ENCODE measurements at regions of chr20 and their contacts with region 1.

Region 1: GRCh38 chr20:40689943-40690835 is 1.2 kb upstream of the MAFB start:
- DNase-seq: peak; percentile 92 to 98 (median 96)
- ATAC-seq: peak; percentile 69 to 72
- H3K4me3 ChIP-seq: peak overlapping the region; percentile 61
- H3K27ac ChIP-seq: peak overlapping the region; percentile 91
- H3K4me1 ChIP-seq: no peaks in the 10 kb centered on the region
- H3K27me3 ChIP-seq: no peaks in the 10 kb centered on the region

Region 2: DNA sequence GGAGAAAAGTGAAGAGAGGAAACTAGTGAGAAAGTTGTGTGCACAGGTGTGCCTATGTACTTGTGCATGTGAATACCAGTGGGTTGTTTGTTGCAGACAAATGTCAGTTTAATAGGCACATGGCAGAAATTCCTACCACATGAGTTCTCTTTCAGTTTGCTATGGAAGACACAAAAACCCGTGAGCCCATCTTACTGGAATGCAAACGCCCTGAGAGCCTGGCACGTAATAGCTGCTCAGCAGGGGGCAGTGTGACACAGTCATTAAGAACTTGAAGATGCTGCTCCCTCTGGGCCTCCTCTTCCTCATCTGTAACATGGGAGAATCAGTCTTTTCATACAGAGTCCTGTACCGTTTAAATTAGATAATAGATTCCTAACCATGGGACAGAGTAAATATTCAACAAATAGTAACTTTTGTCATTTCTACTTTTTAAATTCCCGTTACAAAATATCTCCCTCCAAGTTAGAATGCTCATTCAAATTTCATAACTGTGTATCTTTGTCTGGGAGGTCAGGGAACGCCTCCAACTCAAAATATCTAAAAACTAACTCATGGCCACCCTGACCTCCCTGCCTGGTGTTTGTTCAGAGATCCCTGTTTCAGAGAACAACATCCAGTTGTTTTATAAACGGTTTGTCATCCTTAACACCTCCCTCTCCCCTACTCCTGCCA is 804.1 kb before region 1 on chr20:
- intact Hi-C with region 1: loop called in 2 of 4 experiments (anchors 10 kb)
- DNase-seq: peak; percentile 73 to 87 (median 78)
- ATAC-seq: peak; percentile 84
- H3K4me3 ChIP-seq: no peak overlapping the region
- H3K27ac ChIP-seq: no peak overlapping the region
- H3K4me1 ChIP-seq: no peaks in the 10 kb centered on the region
- H3K27me3 ChIP-seq: no peaks in the 10 kb centered on the region

Region 3: GRCh38 chr20:40101560-40101959 is 588.6 kb before region 1 on chr20:
- intact Hi-C with region 1: no loop called
- DNase-seq: no peak
- ATAC-seq: no peak
- H3K4me3 ChIP-seq: no peak overlapping the region
- H3K27ac ChIP-seq: no peak overlapping the region
- H3K4me1 ChIP-seq: no peaks in the 10 kb centered on the region
- H3K27me3 ChIP-seq: no peaks in the 10 kb centered on the region

Region 4: GRCh38 chr20:40160097-40160550 is 530.1 kb before region 1 on chr20:
- intact Hi-C with region 1: loop called in 1 of 4 experiments (anchors 10 kb)
- DNase-seq: peak; percentile 36 to 70 (median 48)
- ATAC-seq: peak; percentile 81 to 87
- H3K4me3 ChIP-seq: no peak overlapping the region
- H3K27ac ChIP-seq: no peak overlapping the region
- H3K4me1 ChIP-seq: no peaks in the 10 kb centered on the region
- H3K27me3 ChIP-seq: no peaks in the 10 kb centered on the region

Region 5: GRCh38 chr20:40265825-40266533 is 424.2 kb before region 1 on chr20:
- intact Hi-C with region 1: loop called in 1 of 4 experiments (anchors 5 kb)
- DNase-seq: no peak
- ATAC-seq: peak; percentile 48 to 51
- H3K4me3 ChIP-seq: no peak overlapping the region
- H3K27ac ChIP-seq: no peak overlapping the region
- H3K4me1 ChIP-seq: no peaks in the 10 kb centered on the region
- H3K27me3 ChIP-seq: no peaks in the 10 kb centered on the region

Measured in right cardiac atrium (tissue), 5 donors.